ENCODE measurements at regions of chr6 and their contacts with region 1.

Region 1: GRCh38 chr6:24064082-24064481 is 61.9 kb upstream of the NRSN1 start:
- DNase-seq: peak in 1 of 3 donors; percentile 39
- ATAC-seq: no peak
- H3K4me3 ChIP-seq: no peak overlapping the region
- H3K4me1 ChIP-seq: no peaks in the 10 kb centered on the region
- CTCF ChIP-seq: no peak

Region 2: GRCh38 chr6:24205020-24205492 is 141.0 kb after region 1 on chr6:
- intact Hi-C with region 1: loop called in 1 of 2 experiments (anchors 10 kb)
- DNase-seq: peak in 1 of 3 donors; percentile 54
- ATAC-seq: no peak
- H3K4me3 ChIP-seq: no peak overlapping the region
- H3K4me1 ChIP-seq: no peaks in the 10 kb centered on the region
- CTCF ChIP-seq: peak; percentile 17

Region 3: GRCh38 chr6:24274441-24275083 is 210.5 kb after region 1 on chr6:
- intact Hi-C with region 1: loop called in 1 of 2 experiments (anchors 10 kb)
- DNase-seq: peak in 1 of 3 donors; percentile 7
- ATAC-seq: no peak
- H3K4me3 ChIP-seq: no peak overlapping the region
- H3K4me1 ChIP-seq: no peaks in the 10 kb centered on the region
- CTCF ChIP-seq: no peak

Measured in mucosa of descending colon (tissue), 3 donors.